CD14-positive monocyte (primary cell): ENCODE measurements at regions of chr10 and their contacts with region 1.

Region 1: GRCh38 chr10:92087750-92088395 is 164.3 kb downstream of the BTAF1 start:
- DNase-seq: peak; percentile 50 to 59 (median 59)
- H3K4me3 ChIP-seq: no peak overlapping the region
- H3K4me3 Mint-ChIP-seq: no peak overlapping the region
- H3K27ac ChIP-seq: no peak overlapping the region
- H3K27ac Mint-ChIP-seq: peak overlapping the region in 1 of 7 donors; percentile 23
- H3K4me1 ChIP-seq: peaks cover 0 to 5% of the 10 kb centered on the region in 2 donors
- H3K4me1 Mint-ChIP-seq: peaks cover 11% of the 10 kb centered on the region
- H3K27me3 ChIP-seq: no peaks in the 10 kb centered on the region
- H3K27me3 Mint-ChIP-seq: peaks cover 0 to 2% (median 0%) of the 10 kb centered on the region in 3 donors
- CTCF ChIP-seq: peak; percentile 79

Region 2: GRCh38 chr10:92432596-92432995 is 344.7 kb after region 1 on chr10:
- intact Hi-C with region 1: loop called in 1 of 2 experiments (anchors 5 kb)
- DNase-seq: no peak
- H3K4me3 ChIP-seq: no peak overlapping the region
- H3K4me3 Mint-ChIP-seq: no peak overlapping the region
- H3K27ac ChIP-seq: no peak overlapping the region
- H3K27ac Mint-ChIP-seq: no peak overlapping the region
- H3K4me1 ChIP-seq: peaks cover 0 to 6% of the 10 kb centered on the region in 2 donors
- H3K4me1 Mint-ChIP-seq: peaks cover 8% of the 10 kb centered on the region
- H3K27me3 ChIP-seq: no peaks in the 10 kb centered on the region
- H3K27me3 Mint-ChIP-seq: no peaks in the 10 kb centered on the region
- CTCF ChIP-seq: no peak